Activated T-helper 2 cell treated with anti-CD3 and anti-CD28 coated beads, Interferon-gamma antibody, Interleukin-2, Interleukin-4, amounts not matched to agents 10 μg/mL and 5 μg/mL and 100 μg/mL, durations not matched to agents 14 hours and 24 hours and 36 hours (primary cell): ENCODE measurements at regions of chr22 and their contacts with region 1.

Region 1: GRCh38 chr22:39090426-39091064 is 6.5 kb upstream of the APOBEC3H start:
- DNase-seq: peak; percentile 81
- H3K4me3 Mint-ChIP-seq: peak overlapping the region; percentile 56
- H3K27ac Mint-ChIP-seq: peak overlapping the region; percentile 98
- H3K4me1 Mint-ChIP-seq: peaks cover 72% of the 10 kb centered on the region
- H3K27me3 Mint-ChIP-seq: no peaks in the 10 kb centered on the region

Region 2: GRCh38 chr22:39013942-39014722 is 76.4 kb before region 1 on chr22 and contains the start of gene APOBEC3C:
- intact Hi-C with region 1: loop called (anchors 5 kb)
- DNase-seq: peak; percentile 83
- H3K4me3 Mint-ChIP-seq: peak within 1 kb of the TSS; percentile 92
- H3K27ac Mint-ChIP-seq: peak within 1 kb of the TSS; percentile 98
- H3K4me1 Mint-ChIP-seq: peaks cover 19% of the 10 kb centered on the region
- H3K27me3 Mint-ChIP-seq: no peaks in the 10 kb centered on the region
- total RNA-seq, gene APOBEC3C: 91.7 and 93.1 TPM in 2 replicates

Region 3: DNA sequence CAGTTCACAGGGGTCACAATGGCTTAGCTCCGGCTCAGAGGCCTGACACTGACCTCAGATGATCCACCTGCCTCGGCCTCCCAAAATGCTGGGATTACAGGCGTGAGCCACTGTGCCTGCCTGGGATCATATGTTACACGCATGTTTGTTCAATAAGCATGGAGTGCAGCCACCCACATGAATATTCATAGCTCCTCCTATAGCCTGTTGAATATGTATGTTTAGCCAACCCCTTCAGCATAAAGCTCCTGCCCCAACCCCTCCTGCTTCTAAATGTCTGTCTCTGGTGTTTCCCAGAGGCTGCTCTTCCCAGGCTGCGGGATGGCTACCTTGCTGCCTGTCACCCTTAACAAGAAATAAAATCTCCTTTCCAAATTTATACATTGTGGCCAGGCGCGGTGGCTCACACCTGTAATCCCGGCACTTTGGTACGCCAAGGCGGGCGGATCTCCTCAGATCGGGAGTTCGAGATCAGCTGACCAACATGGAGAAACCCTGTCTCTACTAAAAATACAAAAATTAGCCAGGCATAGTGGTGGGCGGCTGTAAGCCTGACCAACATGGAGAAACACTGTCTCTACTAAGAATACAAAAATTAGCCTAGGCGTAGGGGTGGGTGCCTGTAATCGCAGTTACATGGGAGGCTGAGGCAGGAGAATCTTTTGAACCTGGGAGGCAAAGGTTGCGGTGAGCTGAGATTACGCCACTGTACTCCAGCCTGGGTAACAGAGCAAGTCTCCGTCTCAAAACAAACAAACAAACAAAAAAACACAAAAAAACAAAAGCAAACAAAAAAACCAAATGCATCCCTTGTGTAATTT is 51.0 kb before region 1 on chr22:
- intact Hi-C with region 1: loop called (anchors 5 kb)
- DNase-seq: no peak
- H3K4me3 Mint-ChIP-seq: peak overlapping the region; percentile 73
- H3K27ac Mint-ChIP-seq: peak overlapping the region; percentile 82
- H3K4me1 Mint-ChIP-seq: peaks cover 21% of the 10 kb centered on the region
- H3K27me3 Mint-ChIP-seq: no peaks in the 10 kb centered on the region

Region 4: DNA sequence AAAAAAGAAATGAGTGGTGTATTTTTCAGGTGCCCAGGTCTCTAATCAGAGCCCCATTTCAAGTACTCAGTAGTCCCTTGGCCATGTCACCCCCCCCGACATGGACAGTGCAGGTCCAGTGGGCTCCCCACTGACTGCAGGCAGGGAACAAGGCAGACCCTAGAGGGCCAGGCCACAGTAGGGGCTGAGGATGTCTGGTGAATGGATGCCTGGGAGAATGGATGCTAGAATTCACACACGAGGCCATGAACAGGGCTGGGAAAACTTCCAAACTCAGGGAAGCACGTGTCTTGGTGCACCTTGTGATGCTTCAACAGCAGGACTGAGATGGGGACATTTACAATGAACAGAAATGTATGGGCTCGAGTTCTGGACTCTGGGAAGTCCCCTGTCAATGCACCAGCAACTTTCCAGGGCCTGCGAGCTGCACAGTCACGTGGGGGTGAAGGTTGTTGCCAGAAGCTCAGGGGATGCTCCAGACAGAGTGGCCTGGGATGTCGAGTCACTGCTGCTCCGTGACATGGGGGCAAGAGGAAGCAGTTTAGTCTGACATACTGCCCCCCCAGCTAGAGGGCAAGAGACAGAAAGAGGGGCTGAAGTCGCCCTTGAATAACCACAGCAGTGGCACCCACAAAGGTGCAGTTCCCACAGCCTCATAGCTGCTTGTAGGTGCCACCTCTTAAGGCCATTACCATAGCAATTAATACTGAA is 10.3 kb before region 1 on chr22:
- intact Hi-C with region 1: loop called (anchors 2 kb)
- DNase-seq: no peak
- H3K4me3 Mint-ChIP-seq: no peak overlapping the region
- H3K27ac Mint-ChIP-seq: peak overlapping the region; percentile 20
- H3K4me1 Mint-ChIP-seq: peaks cover 32% of the 10 kb centered on the region
- H3K27me3 Mint-ChIP-seq: no peaks in the 10 kb centered on the region

Region 5: DNA sequence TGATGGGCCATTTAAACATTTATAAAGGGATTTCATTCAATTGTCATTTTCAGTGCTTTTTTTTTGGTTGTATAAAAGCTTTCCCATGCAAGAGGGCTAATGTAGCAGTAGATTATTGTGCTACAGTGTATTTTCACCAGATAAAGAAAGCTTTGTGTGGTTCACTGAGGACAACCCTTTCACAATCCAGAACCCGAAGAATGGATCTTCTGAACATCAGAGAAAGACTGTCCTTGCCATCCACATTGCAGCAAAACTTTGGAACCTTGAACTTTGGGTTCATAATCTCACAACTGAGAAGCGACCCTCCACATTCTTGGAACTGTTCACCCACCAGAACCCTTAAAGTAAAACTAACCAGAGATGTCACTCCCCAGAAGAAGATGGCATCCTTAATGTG is 15.8 kb after region 1 on chr22:
- intact Hi-C with region 1: no loop called
- DNase-seq: no peak
- H3K4me3 Mint-ChIP-seq: no peak overlapping the region
- H3K27ac Mint-ChIP-seq: no peak overlapping the region
- H3K4me1 Mint-ChIP-seq: peaks cover 9% of the 10 kb centered on the region
- H3K27me3 Mint-ChIP-seq: no peaks in the 10 kb centered on the region

Region 6: GRCh38 chr22:39117585-39118191 is 27.1 kb after region 1 on chr22:
- intact Hi-C with region 1: loop called (anchors 2 kb)
- DNase-seq: peak; percentile 58
- H3K4me3 Mint-ChIP-seq: peak overlapping the region; percentile 41
- H3K27ac Mint-ChIP-seq: peak overlapping the region; percentile 90
- H3K4me1 Mint-ChIP-seq: peaks cover 50% of the 10 kb centered on the region
- H3K27me3 Mint-ChIP-seq: no peaks in the 10 kb centered on the region